ENCODE measurements at regions of chr2 and their contacts with region 1.

Region 1: DNA sequence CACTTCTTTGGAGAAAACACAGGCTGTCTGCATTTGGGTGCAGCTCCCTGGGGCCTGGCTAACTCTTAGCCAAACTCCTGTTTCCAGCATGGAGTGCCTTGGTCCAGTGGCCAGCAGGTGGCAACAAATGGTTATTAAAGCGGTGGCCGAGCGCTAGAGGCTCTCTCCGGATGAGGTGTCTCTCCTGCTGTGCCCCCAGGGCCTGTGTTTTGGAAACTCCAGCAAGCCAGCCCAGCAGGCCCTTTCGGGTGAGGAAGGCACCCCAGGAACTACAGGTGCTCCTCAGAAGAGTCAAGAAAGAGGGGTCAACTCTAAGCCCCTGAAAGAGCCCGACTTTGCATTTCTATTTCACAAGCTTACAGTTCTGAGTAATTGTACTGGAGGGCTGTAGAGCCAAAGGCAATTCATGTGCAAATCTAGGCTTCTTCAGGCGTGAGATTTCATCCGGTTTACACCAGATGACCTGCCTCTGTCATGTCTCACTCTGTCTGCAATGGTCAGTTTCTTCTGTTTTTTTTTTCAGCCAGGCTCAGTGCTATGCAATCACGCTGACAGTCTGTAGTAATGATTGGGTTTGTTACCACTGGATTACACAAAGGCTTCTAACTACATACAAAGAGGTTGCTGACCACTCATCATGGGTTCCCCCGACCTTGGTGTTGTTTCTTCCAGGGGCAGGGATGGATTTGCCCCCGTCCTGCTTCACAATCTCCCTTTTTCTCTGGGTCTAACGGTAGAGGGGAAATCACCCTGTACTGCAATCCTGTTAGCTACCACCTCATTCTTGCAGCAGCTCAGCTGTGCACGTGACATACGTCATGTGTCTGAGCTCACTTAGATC is 7.6 kb upstream of the CHRNA1 start:
- DNase-seq: peak; percentile 50
- H3K4me3 ChIP-seq: no peak overlapping the region
- H3K27me3 ChIP-seq: no peaks in the 10 kb centered on the region
- CTCF ChIP-seq: peak; percentile 85

Region 2: DNA sequence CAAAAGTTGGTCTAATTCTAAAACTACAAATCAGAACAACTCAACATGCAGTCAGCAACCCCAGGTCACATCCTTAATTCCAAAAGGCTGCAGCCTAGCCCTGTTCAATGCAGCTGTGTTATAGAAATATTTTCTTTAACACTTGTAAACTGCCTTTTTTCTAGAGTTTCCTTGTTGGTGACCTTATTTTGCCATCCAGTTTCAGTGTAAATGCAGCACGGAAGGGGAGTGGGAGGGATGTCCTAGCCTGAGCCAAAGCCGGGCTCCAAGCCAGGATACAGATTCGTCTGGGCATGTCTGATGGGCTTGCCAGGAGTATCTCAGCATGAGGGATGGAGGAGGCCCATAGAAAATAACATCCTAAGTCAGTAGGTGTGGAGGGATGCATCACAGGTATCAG is 788.9 kb before region 1 on chr2:
- CTCF ChIA-PET with region 1: no interaction called
- POLR2A ChIA-PET with region 1: no interaction called
- DNase-seq: no peak
- H3K4me3 ChIP-seq: no peak overlapping the region
- H3K27me3 ChIP-seq: no peaks in the 10 kb centered on the region
- CTCF ChIP-seq: no peak

Region 3: GRCh38 chr2:174697255-174697654 is 74.6 kb before region 1 on chr2:
- CTCF ChIA-PET with region 1: interaction called, 15 read pairs
- POLR2A ChIA-PET with region 1: no interaction called
- DNase-seq: no peak
- H3K4me3 ChIP-seq: no peak overlapping the region
- H3K27me3 ChIP-seq: peaks cover 22% of the 10 kb centered on the region
- CTCF ChIP-seq: peak; percentile 95

Region 4: GRCh38 chr2:174797781-174798276 is 26.0 kb after region 1 on chr2:
- CTCF ChIA-PET with region 1: interaction called, 51 read pairs
- POLR2A ChIA-PET with region 1: no interaction called
- DNase-seq: peak; percentile 79
- H3K4me3 ChIP-seq: no peak overlapping the region
- H3K27me3 ChIP-seq: no peaks in the 10 kb centered on the region
- CTCF ChIP-seq: no peak

Region 5: DNA sequence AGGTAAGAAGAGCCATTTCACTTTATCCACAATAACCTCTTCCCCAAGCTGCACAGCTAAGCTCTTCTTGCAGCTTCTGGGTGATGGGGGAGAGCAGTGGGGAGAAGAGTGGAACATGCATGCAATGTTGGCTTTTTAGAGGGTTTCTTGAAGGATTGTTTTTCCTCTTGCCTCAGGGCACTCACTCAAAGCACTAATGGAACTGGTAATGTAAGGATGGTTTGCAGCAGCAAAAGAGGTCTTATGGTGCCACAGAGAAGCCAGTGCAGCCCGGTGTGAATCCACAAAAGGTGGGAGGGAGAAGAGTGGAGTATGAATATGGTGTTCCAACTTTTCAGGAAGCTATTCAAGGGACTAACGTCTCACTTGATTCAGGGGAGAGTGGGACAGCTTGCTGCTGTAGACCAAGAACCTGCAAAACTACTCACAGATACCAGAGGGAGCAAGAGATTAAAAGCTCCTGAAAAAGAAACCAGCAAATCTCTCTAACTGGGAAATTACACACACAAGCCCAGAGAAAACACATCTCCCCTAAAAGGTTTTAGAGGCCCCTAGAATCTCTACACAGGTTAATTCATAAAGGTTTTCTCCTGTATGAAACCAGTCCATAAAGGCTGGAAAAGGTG is 116.9 kb after region 1 on chr2:
- CTCF ChIA-PET with region 1: interaction called, 11 read pairs
- POLR2A ChIA-PET with region 1: no interaction called
- DNase-seq: no peak
- H3K4me3 ChIP-seq: no peak overlapping the region
- H3K27me3 ChIP-seq: no peaks in the 10 kb centered on the region
- CTCF ChIP-seq: peak; percentile 23; the same call in 1 of the 2 replicates

Region 6: DNA sequence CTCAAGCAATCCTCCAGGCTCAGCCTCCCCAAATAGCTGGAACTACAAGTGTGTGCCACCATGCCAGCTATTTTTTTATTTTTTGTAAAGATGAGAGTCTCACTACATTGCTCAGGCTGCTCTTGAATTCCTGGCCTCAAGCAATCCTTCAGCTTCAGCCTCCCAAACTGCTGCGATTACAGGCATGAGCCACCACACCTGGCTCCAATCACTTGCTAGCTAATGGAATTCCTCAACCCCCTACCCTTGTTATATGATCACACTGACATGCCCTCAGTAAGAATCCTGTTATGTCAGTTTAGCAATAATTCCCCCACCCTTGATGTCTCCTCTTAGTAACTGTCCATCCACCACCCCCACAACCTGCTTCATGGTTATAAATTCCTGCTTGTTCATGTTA is 221.0 kb after region 1 on chr2:
- CTCF ChIA-PET with region 1: interaction called, 142 read pairs
- POLR2A ChIA-PET with region 1: no interaction called
- DNase-seq: no peak
- H3K4me3 ChIP-seq: no peak overlapping the region
- H3K27me3 ChIP-seq: no peaks in the 10 kb centered on the region
- CTCF ChIP-seq: no peak